ENCODE measurements at regions of chr2 and their contacts with region 1.

Region 1: GRCh38 chr2:10408649-10409579 is 39.2 kb downstream of the ODC1 start:
- DNase-seq: peak; percentile 79 to 81 (median 80)
- H3K4me3 ChIP-seq: peak overlapping the region in 1 of 2 donors; percentile 22
- H3K4me3 Mint-ChIP-seq: peak overlapping the region; percentile 79 to 94 (median 86)
- H3K27ac ChIP-seq: peak overlapping the region; percentile 48
- H3K27ac Mint-ChIP-seq: peak overlapping the region; percentile 83 to 97 (median 95)
- H3K4me1 ChIP-seq: peaks cover 41% of the 10 kb centered on the region
- H3K4me1 Mint-ChIP-seq: peaks cover 30 to 44% (median 33%) of the 10 kb centered on the region in 4 donors
- H3K27me3 ChIP-seq: no peaks in the 10 kb centered on the region
- H3K27me3 Mint-ChIP-seq: no peaks in the 10 kb centered on the region

Region 2: DNA sequence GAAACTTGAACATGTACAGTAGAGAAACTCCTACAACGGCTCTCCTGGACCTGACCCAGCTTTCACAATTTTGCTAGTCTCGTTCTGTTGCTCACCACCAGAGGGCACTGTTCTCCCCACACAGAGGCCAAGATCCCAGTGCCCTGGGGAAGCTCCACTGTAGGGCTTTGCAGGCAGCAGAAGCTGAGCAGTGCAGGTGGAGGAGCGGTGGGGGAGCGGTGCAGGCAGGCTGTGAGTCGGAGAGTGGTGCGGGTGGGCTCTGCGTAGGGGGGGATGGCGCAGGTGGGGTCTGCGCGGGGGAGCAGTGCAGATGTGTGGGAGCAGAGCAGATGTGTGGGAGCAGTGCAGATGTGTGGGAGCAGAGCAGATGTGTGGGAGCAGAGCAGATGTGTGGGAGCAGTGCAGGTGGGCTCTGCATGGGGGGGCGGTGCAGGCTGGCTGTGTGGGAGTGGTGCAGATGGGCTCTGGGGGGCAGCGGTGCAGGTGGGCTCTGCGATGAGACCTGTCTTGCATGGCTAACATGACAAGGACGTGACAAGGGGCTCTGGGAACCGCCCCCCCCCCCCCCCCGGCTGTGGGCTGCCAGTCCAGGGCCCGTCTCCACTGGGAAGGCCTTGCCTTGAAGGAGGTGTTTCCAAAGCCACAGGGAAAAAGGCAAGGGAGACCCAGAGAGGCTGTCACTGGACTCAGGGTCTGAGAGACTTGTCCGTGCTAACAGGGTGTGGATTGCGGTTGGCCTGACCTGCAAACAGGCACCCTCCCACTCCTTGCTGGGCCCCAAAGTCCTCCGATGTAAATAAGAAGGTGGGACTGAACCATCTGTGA is 336.0 kb before region 1 on chr2:
- CTCF ChIA-PET with region 1: interaction called, 14 read pairs
- POLR2A ChIA-PET with region 1: no interaction called
- intact Hi-C with region 1: loop called (anchors 1 kb)
- DNase-seq: peak; percentile 77 to 81 (median 79)
- H3K4me3 ChIP-seq: no peak overlapping the region
- H3K4me3 Mint-ChIP-seq: no peak overlapping the region
- H3K27ac ChIP-seq: no peak overlapping the region
- H3K27ac Mint-ChIP-seq: no peak overlapping the region
- H3K4me1 ChIP-seq: no peaks in the 10 kb centered on the region
- H3K4me1 Mint-ChIP-seq: peaks cover 3 to 7% (median 4%) of the 10 kb centered on the region in 4 donors
- H3K27me3 ChIP-seq: peaks cover 2% of the 10 kb centered on the region
- H3K27me3 Mint-ChIP-seq: peaks cover 27 to 35% of the 10 kb centered on the region in 2 donors

Region 3: DNA sequence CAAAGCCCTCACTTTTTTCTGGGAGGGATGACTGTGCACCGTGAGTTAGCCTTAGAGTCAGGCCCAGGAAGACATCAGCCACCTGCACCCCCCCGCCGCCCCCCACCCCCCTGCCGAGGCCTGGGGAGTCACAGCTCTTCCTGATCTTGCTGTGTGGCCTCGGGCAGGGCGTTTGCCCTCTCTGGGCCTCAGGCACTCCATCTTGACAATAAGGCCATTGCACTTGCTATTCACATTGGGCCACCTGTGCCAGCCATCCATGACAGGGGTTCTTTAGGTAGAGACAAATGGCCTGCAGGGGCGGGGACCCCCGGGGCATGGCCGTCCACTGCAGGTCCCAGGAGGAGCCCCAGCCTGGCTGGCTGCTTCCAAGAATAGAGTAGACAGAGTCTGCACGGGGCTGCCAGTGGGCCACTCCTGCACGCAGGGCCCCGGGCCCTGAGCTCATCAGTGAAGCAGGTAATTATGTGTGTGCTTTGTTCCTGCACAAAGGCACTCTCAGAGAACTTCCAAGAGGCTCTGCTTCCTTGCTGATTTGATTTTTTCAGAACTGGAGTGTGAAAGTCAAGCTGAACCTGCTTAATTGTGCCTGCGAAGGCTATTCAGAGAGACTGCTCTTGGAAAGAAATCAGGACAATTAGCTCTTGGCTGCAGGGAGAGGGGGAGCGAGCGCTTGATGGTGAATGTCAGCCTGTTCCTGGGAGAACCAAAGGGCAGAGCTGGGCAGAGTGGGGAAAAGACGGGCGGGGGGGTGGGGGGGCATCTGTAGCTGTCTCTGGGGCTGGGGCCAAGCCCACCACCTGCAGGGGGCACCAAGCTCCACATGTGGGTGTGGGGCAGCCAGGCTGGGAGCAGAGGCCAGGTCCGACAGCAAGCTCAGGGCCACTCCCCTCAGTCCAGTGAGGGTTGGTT is 246.1 kb before region 1 on chr2:
- CTCF ChIA-PET with region 1: interaction called, 31 read pairs
- POLR2A ChIA-PET with region 1: no interaction called
- intact Hi-C with region 1: no loop called
- DNase-seq: no peak
- H3K4me3 ChIP-seq: no peak overlapping the region
- H3K4me3 Mint-ChIP-seq: no peak overlapping the region
- H3K27ac ChIP-seq: no peak overlapping the region
- H3K27ac Mint-ChIP-seq: no peak overlapping the region
- H3K4me1 ChIP-seq: peaks cover 7% of the 10 kb centered on the region
- H3K4me1 Mint-ChIP-seq: peaks cover 9 to 17% (median 13%) of the 10 kb centered on the region in 4 donors
- H3K27me3 ChIP-seq: no peaks in the 10 kb centered on the region
- H3K27me3 Mint-ChIP-seq: no peaks in the 10 kb centered on the region

Region 4: GRCh38 chr2:10302479-10303180 is 106.3 kb before region 1 on chr2 and contains the start of gene HPCAL1:
- CTCF ChIA-PET with region 1: interaction called, 208 read pairs
- POLR2A ChIA-PET with region 1: interaction called, 83 read pairs
- intact Hi-C with region 1: loop called (anchors 1 kb)
- DNase-seq: peak; percentile 79 to 88 (median 85)
- H3K4me3 ChIP-seq: peak within 1 kb of the TSS; percentile 75 to 77
- H3K4me3 Mint-ChIP-seq: peak within 1 kb of the TSS; percentile 97 to 100 (median 98)
- H3K27ac ChIP-seq: peak within 1 kb of the TSS; percentile 65
- H3K27ac Mint-ChIP-seq: peak within 1 kb of the TSS; percentile 87 to 96 (median 94)
- H3K4me1 ChIP-seq: peaks cover 66% of the 10 kb centered on the region
- H3K4me1 Mint-ChIP-seq: peaks cover 56 to 86% (median 72%) of the 10 kb centered on the region in 4 donors
- H3K27me3 ChIP-seq: no peaks in the 10 kb centered on the region
- H3K27me3 Mint-ChIP-seq: no peaks in the 10 kb centered on the region
- total RNA-seq, gene HPCAL1: 77.1 to 80.7 TPM

Region 5: GRCh38 chr2:10360851-10361588 is 47.9 kb before region 1 on chr2:
- CTCF ChIA-PET with region 1: interaction called, 12 read pairs
- POLR2A ChIA-PET with region 1: interaction called, 3 read pairs
- intact Hi-C with region 1: loop called (anchors 5 kb)
- DNase-seq: no peak
- H3K4me3 ChIP-seq: no peak overlapping the region
- H3K4me3 Mint-ChIP-seq: no peak overlapping the region
- H3K27ac ChIP-seq: no peak overlapping the region
- H3K27ac Mint-ChIP-seq: peak overlapping the region in 5 of 7 donors; percentile 3 to 72 (median 30)
- H3K4me1 ChIP-seq: peaks cover 15% of the 10 kb centered on the region
- H3K4me1 Mint-ChIP-seq: peaks cover 16 to 76% (median 36%) of the 10 kb centered on the region in 4 donors
- H3K27me3 ChIP-seq: no peaks in the 10 kb centered on the region
- H3K27me3 Mint-ChIP-seq: no peaks in the 10 kb centered on the region

Region 6: DNA sequence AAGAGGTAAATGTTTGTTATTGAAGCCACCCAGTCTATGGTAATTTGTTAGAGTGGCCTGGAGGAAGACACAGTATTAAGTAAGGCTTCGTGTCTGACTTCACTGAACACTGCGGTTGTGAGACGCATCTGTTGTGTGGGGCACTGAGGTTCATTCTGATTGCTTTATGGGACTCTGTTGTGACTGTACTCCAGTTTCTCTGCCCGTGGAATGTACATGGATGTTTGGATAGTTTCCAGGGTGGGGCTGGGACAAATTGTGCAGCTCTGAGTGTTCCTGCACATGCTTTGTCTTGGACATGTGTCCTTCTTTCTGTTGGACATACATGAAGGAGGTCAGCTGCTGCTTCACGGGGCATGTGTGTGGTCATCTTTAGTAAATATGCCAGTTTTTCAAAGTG is 19.3 kb before region 1 on chr2:
- CTCF ChIA-PET with region 1: interaction called, 28 read pairs
- POLR2A ChIA-PET with region 1: no interaction called
- intact Hi-C with region 1: no loop called
- DNase-seq: no peak
- H3K4me3 ChIP-seq: no peak overlapping the region
- H3K4me3 Mint-ChIP-seq: no peak overlapping the region
- H3K27ac ChIP-seq: no peak overlapping the region
- H3K27ac Mint-ChIP-seq: peak overlapping the region; percentile 38 to 81 (median 73)
- H3K4me1 ChIP-seq: peaks cover 78% of the 10 kb centered on the region
- H3K4me1 Mint-ChIP-seq: peaks cover 32 to 91% (median 61%) of the 10 kb centered on the region in 4 donors
- H3K27me3 ChIP-seq: no peaks in the 10 kb centered on the region
- H3K27me3 Mint-ChIP-seq: no peaks in the 10 kb centered on the region

Region 7: GRCh38 chr2:10434886-10435819 is 26.2 kb after region 1 on chr2:
- CTCF ChIA-PET with region 1: interaction called, 91 read pairs
- POLR2A ChIA-PET with region 1: interaction called, 6 read pairs
- intact Hi-C with region 1: loop called (anchors 1 kb)
- DNase-seq: peak in 4 of 5 donors; percentile 48 to 77 (median 66)
- H3K4me3 ChIP-seq: no peak overlapping the region
- H3K4me3 Mint-ChIP-seq: peak overlapping the region in 2 of 8 donors; percentile 15 to 24
- H3K27ac ChIP-seq: no peak overlapping the region
- H3K27ac Mint-ChIP-seq: peak overlapping the region in 2 of 7 donors; percentile 38 to 75
- H3K4me1 ChIP-seq: peaks cover 15% of the 10 kb centered on the region
- H3K4me1 Mint-ChIP-seq: peaks cover 4 to 13% (median 8%) of the 10 kb centered on the region in 4 donors
- H3K27me3 ChIP-seq: no peaks in the 10 kb centered on the region
- H3K27me3 Mint-ChIP-seq: peaks cover 0 to 5% of the 10 kb centered on the region in 2 donors

Region 8: GRCh38 chr2:10457911-10458604 is 49.1 kb after region 1 on chr2:
- CTCF ChIA-PET with region 1: no interaction called
- POLR2A ChIA-PET with region 1: no interaction called
- intact Hi-C with region 1: no loop called
- DNase-seq: no peak
- H3K4me3 ChIP-seq: no peak overlapping the region
- H3K4me3 Mint-ChIP-seq: no peak overlapping the region
- H3K27ac ChIP-seq: no peak overlapping the region
- H3K27ac Mint-ChIP-seq: peak overlapping the region in 1 of 7 donors; percentile 50
- H3K4me1 ChIP-seq: no peaks in the 10 kb centered on the region
- H3K4me1 Mint-ChIP-seq: peaks cover 0 to 3% (median under 1%) of the 10 kb centered on the region in 4 donors
- H3K27me3 ChIP-seq: no peaks in the 10 kb centered on the region
- H3K27me3 Mint-ChIP-seq: peaks cover 0 to 15% of the 10 kb centered on the region in 2 donors

Region 9: DNA sequence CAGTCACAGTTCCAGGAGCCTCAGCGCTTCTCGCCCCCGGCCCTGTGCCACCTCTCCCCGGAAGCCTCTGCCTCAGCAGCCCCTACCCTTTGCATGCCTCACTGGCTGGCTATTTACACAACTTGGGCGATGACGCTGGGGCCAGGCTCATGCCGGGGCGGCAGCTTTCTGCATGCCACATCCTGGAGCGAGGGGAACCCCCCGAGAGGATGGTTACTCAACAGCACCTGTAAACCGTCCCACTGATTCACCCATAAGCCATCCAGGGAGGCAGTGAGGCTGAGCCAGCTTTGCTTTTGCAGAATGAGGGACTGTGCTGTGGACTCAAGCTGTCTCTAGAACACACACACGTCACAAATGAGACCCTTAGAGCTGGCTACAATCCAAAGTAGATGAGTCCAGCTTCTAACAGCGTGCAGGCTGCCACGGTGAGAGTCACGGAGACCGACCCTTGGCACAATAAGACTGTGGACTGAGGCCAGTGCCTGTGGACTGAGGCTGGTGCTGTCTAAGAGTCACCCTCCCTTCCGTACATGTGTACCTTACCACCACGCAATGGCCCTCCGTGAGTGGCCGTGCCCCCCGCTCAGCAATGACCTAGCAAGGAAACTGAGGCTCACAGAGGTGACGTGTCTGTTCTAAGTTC is 84.8 kb after region 1 on chr2:
- CTCF ChIA-PET with region 1: no interaction called
- POLR2A ChIA-PET with region 1: no interaction called
- intact Hi-C with region 1: no loop called
- DNase-seq: peak; percentile 82 to 95 (median 89)
- H3K4me3 ChIP-seq: peak overlapping the region in 1 of 2 donors; percentile 33
- H3K4me3 Mint-ChIP-seq: peak overlapping the region in 7 of 8 donors; percentile 46 to 82 (median 53)
- H3K27ac ChIP-seq: peak overlapping the region; percentile 52
- H3K27ac Mint-ChIP-seq: peak overlapping the region; percentile 86 to 96 (median 92)
- H3K4me1 ChIP-seq: peaks cover 29% of the 10 kb centered on the region
- H3K4me1 Mint-ChIP-seq: peaks cover 15 to 39% (median 21%) of the 10 kb centered on the region in 4 donors
- H3K27me3 ChIP-seq: no peaks in the 10 kb centered on the region
- H3K27me3 Mint-ChIP-seq: peaks cover 5 to 6% of the 10 kb centered on the region in 2 donors